Aorta (tissue), 5 donors: ENCODE measurements at regions of chr13 and their contacts with region 1.

Region 1: DNA sequence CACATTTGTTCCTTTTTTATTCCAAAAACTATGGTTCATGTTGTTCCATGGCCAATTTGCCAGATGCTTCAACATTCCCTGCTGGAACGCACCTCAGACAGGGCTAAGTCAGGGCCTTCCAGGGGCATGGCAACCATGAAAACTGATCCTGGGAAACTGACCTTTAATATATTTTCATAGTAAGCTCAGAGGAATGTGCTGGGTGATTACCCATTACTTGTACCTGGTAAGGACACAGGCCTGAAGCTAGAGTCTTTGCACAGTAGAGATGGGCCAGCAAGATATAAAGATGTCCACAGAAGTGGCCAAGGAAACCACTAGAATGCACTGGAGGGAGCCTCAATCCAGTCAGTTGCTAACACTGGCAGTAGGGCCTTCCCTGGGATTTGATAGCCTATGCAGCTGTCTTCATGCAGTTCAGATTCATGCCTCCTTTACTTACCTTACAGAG is 353.1 kb downstream of the ENOX1 start:
- DNase-seq: no peak
- ATAC-seq: no peak
- H3K4me3 ChIP-seq: no peak overlapping the region
- H3K27ac ChIP-seq: peak overlapping the region in 1 of 2 donors; percentile 0
- H3K4me1 ChIP-seq: peaks cover 5 to 11% of the 10 kb centered on the region in 2 donors
- H3K27me3 ChIP-seq: no peaks in the 10 kb centered on the region

Region 2: GRCh38 chr13:42466123-42466522 is 967.6 kb before region 1 on chr13:
- intact Hi-C with region 1: no loop called
- DNase-seq: no peak
- ATAC-seq: no peak
- H3K4me3 ChIP-seq: no peak overlapping the region
- H3K27ac ChIP-seq: no peak overlapping the region
- H3K4me1 ChIP-seq: no peaks in the 10 kb centered on the region
- H3K27me3 ChIP-seq: no peaks in the 10 kb centered on the region

Region 3: GRCh38 chr13:43473437-43473836 is 39.7 kb after region 1 on chr13:
- intact Hi-C with region 1: loop called in 1 of 2 experiments (anchors 5 kb)
- DNase-seq: no peak
- ATAC-seq: no peak
- H3K4me3 ChIP-seq: no peak overlapping the region
- H3K27ac ChIP-seq: no peak overlapping the region
- H3K4me1 ChIP-seq: peaks cover 0 to 4% of the 10 kb centered on the region in 2 donors
- H3K27me3 ChIP-seq: no peaks in the 10 kb centered on the region

Region 4: GRCh38 chr13:43516401-43516833 is 82.7 kb after region 1 on chr13:
- intact Hi-C with region 1: loop called in 1 of 2 experiments (anchors 10 kb)
- DNase-seq: no peak
- ATAC-seq: peak; percentile 86
- H3K4me3 ChIP-seq: no peak overlapping the region
- H3K27ac ChIP-seq: peak overlapping the region; percentile 48 to 57
- H3K4me1 ChIP-seq: peaks cover 2 to 8% of the 10 kb centered on the region in 2 donors
- H3K27me3 ChIP-seq: no peaks in the 10 kb centered on the region